KBM-7 (cell line): ENCODE measurements at regions of chr16 and their contacts with region 1.

Region 1: DNA sequence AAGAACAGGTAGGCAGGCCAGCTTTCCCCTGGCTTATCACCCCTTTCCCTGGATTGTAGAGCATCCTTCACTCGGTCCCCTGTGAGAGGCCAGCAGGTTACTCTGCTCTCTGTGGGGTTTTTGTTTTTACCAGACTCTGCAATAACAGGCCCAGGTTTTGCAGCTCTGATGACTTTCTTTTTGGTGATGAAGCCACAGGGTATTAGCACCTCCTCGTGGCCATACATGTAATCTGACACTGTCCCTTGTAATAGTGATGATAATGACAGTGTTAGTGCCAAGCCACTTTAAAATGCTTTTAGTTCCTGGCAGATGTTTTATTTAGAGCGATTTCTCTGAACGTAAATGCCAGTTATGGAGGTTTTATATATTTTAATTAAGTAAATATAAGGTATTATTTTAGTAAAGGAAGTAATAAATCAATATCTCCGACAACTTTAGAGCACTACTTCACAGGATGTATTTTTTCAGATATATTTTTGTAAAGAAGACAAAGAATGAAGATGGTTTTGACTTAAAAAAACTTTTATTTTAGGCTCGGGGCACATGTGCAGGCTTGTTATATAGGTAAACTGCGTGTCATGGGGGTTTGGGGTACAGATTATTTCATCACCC is 38.0 kb upstream of the CPHXL start:
- DNase-seq: peak; percentile 75

Region 2: DNA sequence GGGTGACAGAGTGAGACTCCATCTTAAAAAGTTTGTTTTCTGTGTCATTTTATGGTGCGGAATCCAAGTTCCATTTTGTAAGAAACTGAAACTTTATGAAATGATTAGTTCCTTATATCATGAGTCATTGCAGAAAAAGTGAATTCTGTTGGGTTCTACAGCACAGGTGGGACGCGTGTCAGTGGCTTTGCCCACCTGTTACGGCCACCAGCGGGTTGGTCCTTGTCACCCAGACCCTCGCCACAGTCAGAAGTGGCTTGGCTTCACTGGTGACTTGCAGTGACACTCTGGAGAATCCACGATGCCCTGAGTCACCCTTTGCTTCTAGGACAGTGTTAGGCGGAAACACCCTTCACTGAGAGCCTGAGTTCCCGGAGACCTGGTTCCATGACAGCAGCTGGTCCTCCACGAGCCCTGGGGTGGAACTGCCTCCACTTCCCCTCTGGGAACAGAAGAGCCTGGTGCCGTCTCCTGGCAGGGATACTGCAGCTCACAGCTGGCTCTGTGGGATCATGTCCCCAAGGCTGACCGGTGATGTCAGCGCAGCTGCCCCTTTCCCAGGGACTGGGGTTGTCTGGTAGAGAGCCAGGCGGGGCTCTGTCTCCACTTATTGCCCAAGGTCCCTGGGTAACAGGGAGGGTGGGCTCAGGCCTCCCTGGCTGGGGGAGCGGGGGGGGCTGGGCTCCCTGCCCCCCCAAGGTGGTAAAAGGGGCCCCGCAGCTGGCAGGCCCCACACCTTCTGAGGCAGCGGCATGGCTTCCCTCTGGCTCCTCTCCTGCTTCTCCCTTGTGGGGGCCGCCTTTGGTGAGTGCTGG is 545.8 kb before region 1 on chr16 and contains the start of gene CTRB1:
- in situ Hi-C with region 1: loop called (anchors 25 kb)
- DNase-seq: no peak

Region 3: GRCh38 chr16:75495076-75495674 is 269.1 kb before region 1 on chr16 and contains the start of gene CHST6:
- in situ Hi-C with region 1: loop called (anchors 25 kb)
- DNase-seq: no peak

Region 4: DNA sequence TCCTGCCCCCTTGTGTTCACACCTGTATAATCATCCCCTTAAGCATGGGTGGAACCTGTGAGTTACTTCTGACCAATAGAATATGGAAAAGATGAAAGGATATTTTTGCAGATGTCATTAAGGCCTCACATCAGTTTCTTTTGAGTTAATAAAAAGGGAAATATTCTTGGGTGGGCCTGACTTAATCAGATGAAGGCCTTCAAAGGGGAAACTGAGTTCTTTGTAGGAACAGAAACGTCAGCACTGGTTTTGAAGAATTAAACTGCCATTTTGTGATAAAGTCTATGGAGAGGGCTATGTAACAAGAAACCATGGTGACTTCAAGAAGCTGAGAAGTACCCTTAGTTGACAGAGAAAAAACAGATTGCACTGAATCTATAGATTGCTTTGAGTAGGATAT is 344.2 kb after region 1 on chr16:
- in situ Hi-C with region 1: no loop called
- DNase-seq: no peak

Region 5: GRCh38 chr16:76748461-76749348 is 984.4 kb after region 1 on chr16:
- in situ Hi-C with region 1: no loop called
- DNase-seq: no peak